ENCODE measurements at regions of chr1 and their contacts with region 1.

Region 1: GRCh38 chr1:21937372-21938221 is 487 bp upstream of the HSPG2 start:
- DNase-seq: peak; percentile 81
- H3K4me3 ChIP-seq: peak overlapping the region; percentile 15 to 82 (median 42)
- H3K27ac ChIP-seq: peak overlapping the region; percentile 80 to 98 (median 85)
- H3K4me1 ChIP-seq: peaks cover 25 to 70% (median 60%) of the 10 kb centered on the region in 4 donors
- H3K27me3 ChIP-seq: no peaks in the 10 kb centered on the region
- CTCF ChIP-seq: no peak
- EP300 ChIP-seq: no peak
- POLR2A ChIP-seq: peak; percentile 28

Region 2: GRCh38 chr1:21904704-21905520 is 32.7 kb before region 1 on chr1:
- in situ Hi-C with region 1: no loop called
- intact Hi-C with region 1: loop called (anchors 5 kb)
- DNase-seq: peak; percentile 82
- H3K4me3 ChIP-seq: no peak overlapping the region
- H3K27ac ChIP-seq: peak overlapping the region; percentile 74 to 98 (median 94)
- H3K4me1 ChIP-seq: peaks cover 59 to 98% (median 73%) of the 10 kb centered on the region in 4 donors
- H3K27me3 ChIP-seq: no peaks in the 10 kb centered on the region
- CTCF ChIP-seq: no peak
- EP300 ChIP-seq: peak; percentile 61
- POLR2A ChIP-seq: peak; percentile 23

Measured in transverse colon (tissue), 4 donors.